WTC11 (cell line): ENCODE measurements at regions of chr16 and their contacts with region 1.

Region 1: GRCh38 chr16:85448557-85449197 is 164.4 kb upstream of the GSE1 start:
- DNase-seq: no peak
- ATAC-seq: peak; percentile 26
- H3K4me3 Mint-ChIP-seq: no peak overlapping the region
- H3K27ac Mint-ChIP-seq: no peak overlapping the region
- H3K4me1 Mint-ChIP-seq: peaks cover 13% of the 10 kb centered on the region
- H3K27me3 Mint-ChIP-seq: no peaks in the 10 kb centered on the region
- CTCF ChIP-seq: no peak

Region 2: GRCh38 chr16:85275533-85276249 is 173.0 kb before region 1 on chr16:
- CTCF ChIA-PET with region 1: no interaction called
- POLR2A ChIA-PET with region 1: no interaction called
- DNase-seq: peak; percentile 93
- ATAC-seq: peak; percentile 85
- H3K4me3 Mint-ChIP-seq: no peak overlapping the region
- H3K27ac Mint-ChIP-seq: no peak overlapping the region
- H3K4me1 Mint-ChIP-seq: peaks cover 26% of the 10 kb centered on the region
- H3K27me3 Mint-ChIP-seq: no peaks in the 10 kb centered on the region
- CTCF ChIP-seq: peak; percentile 66

Region 3: GRCh38 chr16:85428168-85428898 is 20.3 kb before region 1 on chr16:
- CTCF ChIA-PET with region 1: interaction called, 12 read pairs
- POLR2A ChIA-PET with region 1: no interaction called
- DNase-seq: peak; percentile 63
- ATAC-seq: peak; percentile 59
- H3K4me3 Mint-ChIP-seq: no peak overlapping the region
- H3K27ac Mint-ChIP-seq: no peak overlapping the region
- H3K4me1 Mint-ChIP-seq: peaks cover 7% of the 10 kb centered on the region; the same call in 1 of the 2 replicates
- H3K27me3 Mint-ChIP-seq: no peaks in the 10 kb centered on the region
- CTCF ChIP-seq: peak; percentile 27; the same call in 1 of the 2 replicates

Region 4: DNA sequence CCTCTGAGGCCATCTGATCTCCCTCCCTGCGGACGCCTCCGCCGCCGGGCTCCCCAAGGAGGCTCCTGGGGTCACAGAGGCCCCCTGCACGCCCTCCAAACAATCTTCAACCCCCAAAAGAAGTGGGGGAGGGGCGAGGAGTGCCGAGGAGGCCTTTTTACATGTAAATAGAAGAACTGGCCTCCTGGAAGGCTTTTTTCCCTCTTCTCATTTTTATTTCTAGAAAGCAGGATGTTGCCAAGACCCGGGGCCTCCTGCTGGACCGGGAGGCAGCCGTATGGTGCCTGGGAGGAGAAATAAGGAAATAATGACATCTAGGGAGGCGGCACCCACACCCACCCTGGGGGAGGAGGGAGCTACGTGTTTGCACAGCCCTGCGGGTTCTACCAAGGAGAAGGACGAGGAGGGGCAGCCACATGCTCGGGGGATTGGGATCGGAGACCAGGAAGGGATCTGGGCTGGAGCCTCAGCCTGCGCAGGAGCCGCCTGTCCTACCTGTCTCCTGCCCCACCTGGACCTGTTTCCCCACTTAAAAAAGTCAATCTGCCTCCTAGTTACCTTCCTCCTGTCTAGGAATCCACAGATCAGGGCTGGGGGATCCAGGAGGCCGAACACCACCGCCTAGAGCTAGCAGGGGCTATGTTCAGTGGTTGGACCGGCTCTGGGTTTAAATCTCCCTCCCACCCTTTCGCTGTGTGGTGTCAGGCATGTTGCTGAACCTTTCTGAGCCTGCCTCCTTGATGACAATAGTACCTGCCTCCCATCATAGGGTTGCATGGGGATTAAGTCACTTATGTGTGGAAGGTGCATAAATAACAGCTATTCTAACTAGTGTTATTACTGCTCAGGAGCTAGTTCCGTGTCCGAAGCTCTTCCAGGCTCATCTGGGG is 11.3 kb before region 1 on chr16:
- CTCF ChIA-PET with region 1: interaction called, 13 read pairs
- POLR2A ChIA-PET with region 1: no interaction called
- DNase-seq: no peak
- ATAC-seq: peak; percentile 21
- H3K4me3 Mint-ChIP-seq: peak overlapping the region; percentile 50
- H3K27ac Mint-ChIP-seq: peak overlapping the region; percentile 51; the same call in 1 of the 2 replicates
- H3K4me1 Mint-ChIP-seq: peaks cover 39% of the 10 kb centered on the region
- H3K27me3 Mint-ChIP-seq: no peaks in the 10 kb centered on the region
- CTCF ChIP-seq: no peak

Region 5: GRCh38 chr16:85461814-85462713 is 13.4 kb after region 1 on chr16:
- CTCF ChIA-PET with region 1: interaction called, 18 read pairs
- POLR2A ChIA-PET with region 1: no interaction called
- DNase-seq: peak; percentile 73
- ATAC-seq: peak; percentile 77
- H3K4me3 Mint-ChIP-seq: peak overlapping the region; percentile 76
- H3K27ac Mint-ChIP-seq: no peak overlapping the region
- H3K4me1 Mint-ChIP-seq: peaks cover 32% of the 10 kb centered on the region
- H3K27me3 Mint-ChIP-seq: peaks cover 60% of the 10 kb centered on the region
- CTCF ChIP-seq: no peak

Region 6: GRCh38 chr16:85473909-85474620 is 25.4 kb after region 1 on chr16:
- CTCF ChIA-PET with region 1: interaction called, 10 read pairs
- POLR2A ChIA-PET with region 1: no interaction called
- DNase-seq: no peak
- ATAC-seq: peak; percentile 52
- H3K4me3 Mint-ChIP-seq: no peak overlapping the region
- H3K27ac Mint-ChIP-seq: 0 out of 2 replicates have a peak overlapping the region, but pooled peaks have one; percentile 20
- H3K4me1 Mint-ChIP-seq: peaks cover 25% of the 10 kb centered on the region
- H3K27me3 Mint-ChIP-seq: 0 out of 2 replicates have a peak, but pooled peaks cover 2% of the 10 kb centered on the region
- CTCF ChIP-seq: no peak